ENCODE measurements at regions of chr12 and their contacts with region 1.

Region 1: GRCh38 chr12:9064201-9064814 is 51.4 kb downstream of the A2M start:
- DNase-seq: peak; percentile 81
- ATAC-seq: peak; percentile 96
- H3K4me3 Mint-ChIP-seq: peak overlapping the region; percentile 69
- H3K27ac Mint-ChIP-seq: no peak overlapping the region
- H3K4me1 Mint-ChIP-seq: peaks cover 8% of the 10 kb centered on the region
- H3K27me3 Mint-ChIP-seq: peaks cover 2% of the 10 kb centered on the region

Region 2: DNA sequence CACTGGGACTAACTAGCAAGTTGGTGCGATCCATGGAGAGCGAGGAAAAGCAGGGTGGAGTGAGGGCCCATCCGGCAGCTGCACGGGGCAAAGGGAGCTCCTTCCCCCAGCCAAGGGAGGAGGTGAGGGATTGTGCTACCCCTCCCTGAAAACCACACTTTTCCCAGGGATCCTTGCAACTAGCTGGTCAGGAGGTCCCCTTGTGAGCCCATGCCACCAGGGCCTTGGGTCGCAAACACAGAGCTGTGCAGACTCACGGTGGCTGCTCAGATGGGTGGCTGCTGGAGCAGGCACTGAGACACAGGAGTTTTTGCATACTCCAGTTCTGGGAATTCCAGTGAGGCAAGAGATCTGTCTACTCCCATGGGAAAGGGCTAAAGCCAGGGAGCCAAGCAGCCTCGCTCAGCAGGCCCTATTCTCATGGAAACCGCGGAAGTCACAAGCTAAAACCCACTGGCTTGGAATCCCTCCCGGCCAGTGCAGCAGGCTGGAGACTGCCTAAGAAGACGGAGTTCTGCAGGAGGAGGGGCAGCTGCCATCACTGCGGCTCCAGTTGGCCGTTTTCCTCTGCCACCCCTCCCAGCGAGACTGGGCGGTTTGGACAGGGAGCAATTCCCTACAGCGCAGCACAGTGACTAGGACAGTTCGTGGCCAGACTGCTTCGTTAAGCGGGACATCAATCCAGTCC is 918.4 kb before region 1 on chr12:
- CTCF ChIA-PET with region 1: no interaction called
- POLR2A ChIA-PET with region 1: no interaction called
- intact Hi-C with region 1: no loop called
- DNase-seq: no peak
- ATAC-seq: no peak
- H3K4me3 Mint-ChIP-seq: no peak overlapping the region
- H3K27ac Mint-ChIP-seq: no peak overlapping the region
- H3K4me1 Mint-ChIP-seq: no peaks in the 10 kb centered on the region
- H3K27me3 Mint-ChIP-seq: peaks cover 2% of the 10 kb centered on the region

Region 3: GRCh38 chr12:8860165-8860961 is 203.9 kb before region 1 on chr12:
- CTCF ChIA-PET with region 1: no interaction called
- POLR2A ChIA-PET with region 1: no interaction called
- intact Hi-C with region 1: no loop called
- DNase-seq: peak; percentile 51
- ATAC-seq: peak; percentile 71
- H3K4me3 Mint-ChIP-seq: no peak overlapping the region
- H3K27ac Mint-ChIP-seq: no peak overlapping the region
- H3K4me1 Mint-ChIP-seq: no peaks in the 10 kb centered on the region
- H3K27me3 Mint-ChIP-seq: no peaks in the 10 kb centered on the region

Region 4: DNA sequence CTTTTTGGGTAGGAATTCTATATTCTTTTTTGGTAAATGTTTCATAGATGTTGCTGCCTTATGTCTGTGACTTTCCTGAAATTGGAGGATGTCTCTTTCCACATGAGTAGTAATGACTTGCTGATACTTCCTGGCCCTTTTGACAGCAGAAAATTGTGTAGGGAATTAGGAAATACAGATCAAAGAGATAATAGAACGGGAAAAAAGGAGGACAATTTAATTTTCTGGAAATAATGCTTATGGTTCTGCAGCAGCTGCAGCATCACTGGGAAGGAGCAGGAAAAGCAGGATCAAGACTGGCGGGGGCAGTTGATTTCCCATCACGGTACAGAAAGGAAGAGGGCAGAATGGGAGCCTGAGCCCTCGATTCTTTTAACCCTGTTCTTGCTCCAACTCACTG is 212.7 kb after region 1 on chr12:
- CTCF ChIA-PET with region 1: interaction called, 6 read pairs
- POLR2A ChIA-PET with region 1: no interaction called
- intact Hi-C with region 1: loop called in 1 of 2 experiments (anchors 5 kb)
- DNase-seq: no peak
- ATAC-seq: no peak
- H3K4me3 Mint-ChIP-seq: no peak overlapping the region
- H3K27ac Mint-ChIP-seq: no peak overlapping the region
- H3K4me1 Mint-ChIP-seq: peaks cover under 1% of the 10 kb centered on the region
- H3K27me3 Mint-ChIP-seq: peaks cover 11% of the 10 kb centered on the region

Region 5: GRCh38 chr12:9319044-9319841 is 254.9 kb after region 1 on chr12:
- CTCF ChIA-PET with region 1: interaction called, 3 read pairs
- POLR2A ChIA-PET with region 1: no interaction called
- intact Hi-C with region 1: loop called in 1 of 2 experiments (anchors 2 kb)
- DNase-seq: no peak
- ATAC-seq: peak; percentile 55
- H3K4me3 Mint-ChIP-seq: no peak overlapping the region
- H3K27ac Mint-ChIP-seq: no peak overlapping the region
- H3K4me1 Mint-ChIP-seq: no peaks in the 10 kb centered on the region
- H3K27me3 Mint-ChIP-seq: no peaks in the 10 kb centered on the region

Region 6: DNA sequence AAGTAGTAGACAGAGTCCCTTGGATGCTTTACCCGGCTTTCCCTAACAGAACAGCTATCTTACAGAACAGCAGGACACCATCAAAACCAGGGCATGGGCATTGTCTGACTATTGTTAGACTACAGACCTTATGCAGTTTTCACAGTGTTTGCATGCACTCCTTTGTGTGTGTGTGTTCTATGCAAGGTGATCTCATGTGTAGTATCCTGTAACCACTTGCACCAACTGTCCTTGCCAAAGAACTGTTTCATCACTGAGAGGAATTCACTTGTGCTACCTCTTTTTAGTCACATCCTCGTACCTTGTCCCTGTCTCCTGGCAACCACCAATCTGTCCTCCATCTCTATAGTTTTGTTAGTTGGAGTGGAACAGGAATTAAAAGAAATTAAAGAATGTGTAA is 327.5 kb after region 1 on chr12:
- CTCF ChIA-PET with region 1: no interaction called
- POLR2A ChIA-PET with region 1: no interaction called
- intact Hi-C with region 1: no loop called
- DNase-seq: no peak
- ATAC-seq: no peak
- H3K4me3 Mint-ChIP-seq: no peak overlapping the region
- H3K27ac Mint-ChIP-seq: no peak overlapping the region
- H3K4me1 Mint-ChIP-seq: peaks cover 14% of the 10 kb centered on the region
- H3K27me3 Mint-ChIP-seq: no peaks in the 10 kb centered on the region

Measured in activated CD4-positive, alpha-beta T cell treated with anti-CD3 and anti-CD28 coated beads for 36 hours (primary cell).